H1 (cell line): ENCODE measurements at regions of chr5 and their contacts with region 1.

Region 1: DNA sequence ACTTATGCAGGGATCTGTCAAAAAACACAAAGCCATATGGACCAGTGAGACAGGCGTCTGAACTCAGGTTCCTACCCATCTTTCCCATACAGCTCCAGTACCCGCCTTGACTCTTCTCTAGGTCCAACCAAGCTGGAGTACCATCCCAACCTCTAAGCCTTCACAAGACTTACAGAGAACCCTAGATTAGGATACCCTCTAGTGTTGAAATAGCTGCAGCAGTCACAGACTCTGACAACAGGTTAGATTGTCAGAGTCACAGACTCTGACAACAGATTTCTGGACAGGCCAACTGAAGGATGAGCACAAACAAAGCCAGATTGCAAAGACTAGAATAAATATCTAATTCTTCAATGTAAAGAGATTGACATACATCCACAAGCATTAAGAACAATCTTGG is 266.1 kb downstream of the GRIA1 start:
- DNase-seq: no peak
- H3K4me3 ChIP-seq: no peak overlapping the region
- H3K27ac ChIP-seq: no peak overlapping the region
- H3K4me1 ChIP-seq: peaks cover 0 to 4% (median 0%) of the 10 kb centered on the region in 4 experiments; a peak in 1 of 7 replicates
- H3K27me3 ChIP-seq: no peaks in the 10 kb centered on the region
- CTCF ChIP-seq: peak in 2 of 3 experiments; percentile 42; a peak in 3 of 4 replicates
- EP300 ChIP-seq: no peak
- POLR2A ChIP-seq: no peak
- RAD21 ChIP-seq: peak; percentile 69 to 84

Region 2: DNA sequence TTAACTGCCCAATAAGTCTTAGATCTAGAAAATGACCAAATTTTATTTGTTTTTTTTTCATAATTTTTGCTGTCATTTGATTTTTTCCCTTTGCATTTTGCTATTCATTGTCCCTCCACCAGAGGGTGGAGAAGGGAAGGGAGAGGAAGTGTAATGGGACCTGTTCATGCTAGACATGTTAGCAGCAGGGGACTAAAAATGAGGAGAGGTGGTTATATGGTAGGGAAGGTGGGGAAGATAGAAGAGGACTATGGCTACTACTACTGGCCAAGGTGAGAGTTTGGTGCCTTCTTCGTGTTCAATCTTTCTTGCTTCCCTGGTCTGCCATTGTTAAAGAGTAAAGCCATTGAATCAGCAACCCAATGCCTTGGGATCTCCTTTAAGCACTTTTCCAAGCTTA is 259.7 kb before region 1 on chr5:
- CTCF ChIA-PET with region 1: interaction called, 13 read pairs
- POLR2A ChIA-PET with region 1: no interaction called
- DNase-seq: no peak
- H3K4me3 ChIP-seq: no peak overlapping the region
- H3K27ac ChIP-seq: no peak overlapping the region
- H3K4me1 ChIP-seq: peaks cover 0 to 5% (median 3%) of the 10 kb centered on the region in 4 experiments; a peak in 2 of 7 replicates
- H3K27me3 ChIP-seq: peaks cover 0 to under 1% (median 0%) of the 10 kb centered on the region in 4 experiments; a peak in 1 of 7 replicates
- CTCF ChIP-seq: peak in 2 of 3 experiments; percentile 48 to 66; a peak in 2 of 4 replicates
- EP300 ChIP-seq: no peak
- POLR2A ChIP-seq: no peak
- RAD21 ChIP-seq: peak; percentile 86 to 88

Region 3: GRCh38 chr5:153905219-153905618 is 148.7 kb after region 1 on chr5:
- CTCF ChIA-PET with region 1: no interaction called
- POLR2A ChIA-PET with region 1: no interaction called
- DNase-seq: no peak
- H3K4me3 ChIP-seq: no peak overlapping the region
- H3K27ac ChIP-seq: no peak overlapping the region
- H3K4me1 ChIP-seq: no peaks in the 10 kb centered on the region
- H3K27me3 ChIP-seq: no peaks in the 10 kb centered on the region
- CTCF ChIP-seq: no peak
- EP300 ChIP-seq: no peak
- POLR2A ChIP-seq: no peak
- RAD21 ChIP-seq: peak; percentile 36 to 41; a peak in 2 of 4 replicates